Lower leg skin (tissue), 4 donors: ENCODE measurements at regions of chr15 and their contacts with region 1.

Region 1: GRCh38 chr15:64046347-64047153 is at the start of gene DAPK2:
- DNase-seq: peak in 1 of 2 donors; percentile 88
- H3K4me3 ChIP-seq: peak within 1 kb of the TSS; percentile 52
- CTCF ChIP-seq: peak in 1 of 3 donors; percentile 28
- POLR2A ChIP-seq: no peak
- total RNA-seq, gene DAPK2: 10.9 to 27.5 (median 13.3) TPM

Region 2: DNA sequence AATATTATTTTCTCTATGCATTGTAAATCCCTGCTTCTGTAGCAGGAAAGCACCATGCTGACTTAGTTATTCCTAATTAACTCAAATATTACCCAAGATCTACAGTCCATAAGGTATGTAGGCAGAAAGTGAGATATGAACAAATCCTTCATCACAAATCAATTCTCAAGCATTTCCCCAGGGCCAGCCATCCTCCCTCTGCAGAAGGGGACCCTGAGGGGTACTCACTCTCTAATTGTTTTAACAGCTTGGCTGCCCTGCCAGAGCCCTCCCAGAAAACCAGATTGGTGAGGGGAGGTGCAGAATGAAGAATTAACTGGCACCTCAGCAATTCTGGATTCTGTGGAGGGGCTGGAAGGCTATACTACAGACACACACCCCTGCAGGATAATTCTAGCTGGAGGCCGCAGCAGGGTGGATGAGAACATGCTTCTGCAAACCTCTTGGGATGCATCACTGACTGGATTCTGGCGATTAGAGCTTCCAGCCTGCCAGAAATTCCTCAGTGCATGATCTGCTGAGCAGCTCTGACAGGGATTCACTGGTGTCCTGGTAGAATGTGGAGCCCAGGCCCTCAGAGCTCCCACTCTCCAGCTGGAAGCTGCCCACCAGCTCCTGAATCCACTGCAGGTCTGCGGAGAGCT is 124.2 kb before region 1 on chr15:
- intact Hi-C with region 1: no loop called
- DNase-seq: no peak
- H3K4me3 ChIP-seq: no peak overlapping the region
- CTCF ChIP-seq: no peak
- POLR2A ChIP-seq: no peak

Region 3: DNA sequence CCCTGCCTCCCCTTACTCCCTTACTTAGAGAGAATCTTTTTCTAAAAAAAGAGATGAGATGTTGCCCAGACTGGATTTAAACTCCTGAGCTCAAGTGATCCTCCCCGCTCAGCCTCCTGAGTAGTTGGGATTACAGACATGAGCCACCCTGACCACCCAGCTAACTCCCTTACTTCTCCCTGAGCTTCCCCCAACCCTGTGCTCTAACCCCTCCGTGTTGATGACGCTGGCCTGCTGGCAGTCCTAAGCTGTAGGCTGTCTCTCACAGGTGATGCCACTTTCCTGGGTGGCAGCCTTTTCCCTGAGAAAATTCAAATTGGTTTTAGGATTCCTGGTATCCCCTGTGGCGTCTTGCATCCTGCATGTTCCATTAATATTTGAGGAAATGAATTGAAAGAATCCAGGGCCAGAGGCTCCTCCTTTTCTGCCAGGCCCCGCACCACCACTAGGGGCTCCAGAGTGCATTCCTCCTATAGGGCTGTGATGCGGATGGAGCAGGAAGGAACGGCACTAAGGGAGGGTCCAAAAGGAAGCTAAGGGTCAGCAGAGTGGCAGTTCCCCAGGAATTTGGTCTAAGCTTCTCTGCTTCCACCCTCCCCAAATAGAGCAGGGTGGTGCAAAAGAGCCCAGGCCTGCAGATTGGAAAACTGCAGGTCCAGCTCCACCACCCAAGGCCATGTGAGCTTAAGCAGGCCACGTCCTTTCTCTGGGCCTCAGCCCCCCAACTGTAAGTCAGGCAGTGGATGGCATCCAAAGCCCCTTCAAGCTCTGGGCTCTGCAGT is 101.4 kb before region 1 on chr15:
- intact Hi-C with region 1: loop called (anchors 10 kb)
- DNase-seq: peak; percentile 51 to 95
- H3K4me3 ChIP-seq: no peak overlapping the region
- CTCF ChIP-seq: peak in 2 of 3 donors; percentile 21 to 32
- POLR2A ChIP-seq: no peak

Region 4: DNA sequence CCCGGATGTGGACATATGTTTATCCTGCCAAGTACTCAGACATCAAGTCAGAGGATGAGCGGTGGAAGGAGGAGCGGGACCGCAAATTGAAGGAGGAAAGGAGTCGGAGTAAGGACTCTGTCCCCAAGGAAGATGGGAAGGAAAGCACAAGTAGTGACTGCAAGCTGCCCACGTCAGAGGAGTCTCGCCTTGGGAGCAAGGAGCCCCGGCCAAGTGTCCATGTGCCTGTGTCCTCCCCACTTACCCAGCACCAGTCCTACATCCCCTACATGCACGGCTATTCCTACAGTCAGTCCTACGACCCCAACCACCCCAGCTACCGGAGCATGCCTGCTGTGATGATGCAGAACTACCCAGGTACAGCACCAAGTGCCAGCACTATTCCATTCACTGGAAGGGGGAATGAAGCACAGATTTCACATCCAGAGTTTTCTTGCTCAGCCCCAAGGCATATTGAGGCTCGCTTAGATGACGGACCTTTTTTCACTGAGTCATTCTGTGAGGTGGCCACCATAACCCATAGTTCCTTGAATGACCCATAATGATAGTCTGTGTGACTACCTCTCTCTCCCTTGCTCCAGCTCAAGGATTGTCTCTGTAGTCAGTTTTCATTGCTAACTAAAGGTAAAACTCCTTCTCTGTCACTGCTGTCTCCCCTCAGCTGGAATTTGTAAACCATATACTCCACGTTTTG is 631.7 kb after region 1 on chr15:
- intact Hi-C with region 1: no loop called
- DNase-seq: peak in 1 of 2 donors; percentile 72
- H3K4me3 ChIP-seq: no peak overlapping the region
- CTCF ChIP-seq: no peak
- POLR2A ChIP-seq: no peak